ENCODE measurements at regions of chr10 and their contacts with region 1.

Region 1: GRCh38 chr10:22988581-22989360 is 60.9 kb downstream of the ARMC3 start:
- DNase-seq: no peak
- H3K4me3 ChIP-seq: no peak overlapping the region
- H3K27ac ChIP-seq: no peak overlapping the region
- H3K4me1 ChIP-seq: peaks cover 0 to 24% (median 12%) of the 10 kb centered on the region in 6 donors
- H3K27me3 ChIP-seq: no peaks in the 10 kb centered on the region
- CTCF ChIP-seq: peak; percentile 74 to 95 (median 88)
- POLR2A ChIP-seq: no peak

Region 2: DNA sequence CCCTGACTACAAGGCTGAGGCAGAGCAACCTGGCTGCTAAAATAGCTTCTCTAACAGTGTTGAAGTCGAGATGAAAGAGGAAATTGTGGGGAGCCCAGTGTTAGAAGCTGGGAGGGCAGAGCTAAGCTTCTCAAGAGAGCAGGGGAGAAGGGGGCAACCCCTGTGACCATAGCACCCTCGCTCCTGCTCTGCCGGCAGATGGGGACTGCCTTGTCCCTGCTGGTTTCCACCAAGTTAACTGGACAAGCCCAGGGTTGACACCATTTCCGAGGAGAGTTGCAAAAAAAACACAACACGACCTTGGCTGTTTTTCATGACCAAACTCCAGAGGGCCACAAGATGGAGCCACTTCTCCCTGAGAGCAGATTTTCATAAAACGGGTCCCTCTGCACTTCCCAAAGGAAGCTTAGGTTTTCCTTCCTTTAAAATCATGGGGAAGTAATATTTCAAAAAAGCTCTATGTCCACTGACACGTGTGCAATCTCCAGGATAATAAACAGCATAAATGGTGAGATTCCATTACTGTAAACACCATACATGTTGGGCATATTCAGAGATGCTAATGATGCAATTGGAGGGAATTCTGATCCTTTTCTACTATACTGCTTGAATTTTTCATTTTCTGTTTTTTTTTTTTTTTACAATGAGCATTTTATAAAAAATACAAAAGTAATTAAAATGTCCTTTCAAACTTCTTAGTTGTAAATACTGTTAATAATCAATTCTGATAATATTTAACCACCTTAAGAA is 414.8 kb before region 1 on chr10:
- intact Hi-C with region 1: loop called (anchors 10 kb)
- DNase-seq: no peak
- H3K4me3 ChIP-seq: no peak overlapping the region
- H3K27ac ChIP-seq: peak overlapping the region in 5 of 8 donors; percentile 1 to 58 (median 45)
- H3K4me1 ChIP-seq: peaks cover 0 to 62% (median 13%) of the 10 kb centered on the region in 6 donors
- H3K27me3 ChIP-seq: no peaks in the 10 kb centered on the region
- CTCF ChIP-seq: peak in 8 of 11 experiments; percentile 17 to 54 (median 46)
- POLR2A ChIP-seq: no peak

Region 3: DNA sequence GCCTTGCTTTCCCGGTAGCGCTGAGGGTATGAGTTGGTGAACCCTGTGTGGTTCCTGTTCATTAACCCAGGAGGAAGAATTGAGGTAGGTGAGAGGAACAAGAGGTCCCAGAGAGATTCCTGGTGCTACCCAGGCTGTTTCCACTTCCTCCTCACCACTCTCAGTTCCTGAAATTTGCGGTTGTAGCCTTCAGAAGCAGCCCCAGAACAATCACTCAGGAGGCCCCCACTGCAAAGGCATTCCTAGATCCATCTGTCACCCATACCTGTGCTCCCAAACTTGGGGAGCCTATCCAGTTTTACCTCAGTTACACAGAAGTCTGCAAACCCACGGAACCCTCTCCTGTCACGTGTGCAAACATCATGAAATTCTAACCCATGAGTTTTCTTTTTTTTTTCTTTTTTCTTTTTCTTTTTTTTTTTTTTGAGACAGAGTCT is 265.4 kb before region 1 on chr10:
- intact Hi-C with region 1: no loop called
- DNase-seq: no peak
- H3K4me3 ChIP-seq: peak overlapping the region in 2 of 8 donors; percentile 16 to 26
- H3K27ac ChIP-seq: peak overlapping the region in 3 of 8 donors; percentile 17 to 38 (median 21)
- H3K4me1 ChIP-seq: peaks cover 7 to 50% (median 28%) of the 10 kb centered on the region in 6 donors
- H3K27me3 ChIP-seq: no peaks in the 10 kb centered on the region
- CTCF ChIP-seq: no peak
- POLR2A ChIP-seq: no peak

Measured in spleen (tissue), 13 donors.